Mammary epithelial cell (primary cell): ENCODE measurements at regions of chr2 and their contacts with region 1.

Region 1: GRCh38 chr2:169173876-169174275 is 104.5 kb downstream of the DHRS9 start:
- DNase-seq: no peak
- H3K4me3 ChIP-seq: no peak overlapping the region
- H3K27ac ChIP-seq: no peak overlapping the region
- H3K4me1 ChIP-seq: no peaks in the 10 kb centered on the region
- H3K27me3 ChIP-seq: no peaks in the 10 kb centered on the region
- CTCF ChIP-seq: no peak

Region 2: DNA sequence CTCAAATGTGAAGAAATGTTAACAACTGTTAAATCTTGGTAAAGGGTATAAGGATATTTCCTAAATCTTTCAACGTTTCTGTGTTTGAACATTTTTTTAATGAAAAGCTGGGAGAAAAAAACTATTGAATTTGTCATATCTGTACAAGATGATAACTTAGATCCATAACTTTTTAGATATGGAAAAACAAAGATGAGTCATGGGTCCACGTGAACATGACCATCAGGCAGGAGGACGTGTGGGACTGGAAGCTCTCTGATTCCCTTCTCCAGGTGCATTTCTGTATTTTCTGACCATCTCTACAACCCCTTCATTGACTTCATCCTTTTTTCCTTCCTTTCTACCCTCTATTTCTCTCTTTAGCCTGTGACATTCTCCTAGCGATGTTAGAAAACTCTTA is 37.0 kb after region 1 on chr2:
- CTCF ChIA-PET with region 1: interaction called, 7 read pairs
- dilution Hi-C with region 1: loop called (anchors 5 kb)
- in situ Hi-C with region 1: no loop called
- intact Hi-C with region 1: no loop called
- DNase-seq: no peak
- H3K4me3 ChIP-seq: no peak overlapping the region
- H3K27ac ChIP-seq: no peak overlapping the region
- H3K4me1 ChIP-seq: no peaks in the 10 kb centered on the region
- H3K27me3 ChIP-seq: peaks cover 4% of the 10 kb centered on the region
- CTCF ChIP-seq: no peak

Region 3: DNA sequence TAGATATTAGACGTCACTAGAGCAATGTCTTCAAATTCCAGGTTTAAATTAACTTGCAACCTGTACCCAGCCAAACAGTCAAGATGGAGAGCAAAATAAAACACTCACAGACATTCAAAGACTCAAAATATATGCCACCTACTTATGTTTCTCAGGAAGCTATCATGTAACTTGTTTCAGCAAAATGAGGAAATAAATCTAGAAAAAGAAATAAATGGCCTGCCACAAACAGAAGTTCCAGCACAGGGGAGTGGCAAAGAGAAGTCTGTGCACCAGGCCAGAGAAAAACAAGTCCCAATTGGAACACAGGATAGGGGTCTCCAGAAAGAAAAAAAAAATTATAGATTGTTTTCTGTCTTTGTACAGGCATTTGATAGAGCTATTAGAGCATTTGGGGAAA is 91.7 kb after region 1 on chr2:
- CTCF ChIA-PET with region 1: no interaction called
- dilution Hi-C with region 1: loop called (anchors 5 kb)
- in situ Hi-C with region 1: no loop called
- intact Hi-C with region 1: no loop called
- DNase-seq: no peak
- H3K4me3 ChIP-seq: no peak overlapping the region
- H3K27ac ChIP-seq: no peak overlapping the region
- H3K4me1 ChIP-seq: no peaks in the 10 kb centered on the region
- H3K27me3 ChIP-seq: no peaks in the 10 kb centered on the region
- CTCF ChIP-seq: no peak